Activated T-helper 1 cell treated with anti-CD3 and anti-CD28 coated beads, Interleukin-12 subunit alpha, Interleukin-12 subunit beta, Interleukin-2, Interleukin-4 antibody, amounts not matched to agents 30 ng/mL and 10 ng/mL and 1 ng/mL, durations not matched to agents 14 hours and 24 hours and 36 hours (primary cell): ENCODE measurements at regions of chr2 and their contacts with region 1.

Region 1: DNA sequence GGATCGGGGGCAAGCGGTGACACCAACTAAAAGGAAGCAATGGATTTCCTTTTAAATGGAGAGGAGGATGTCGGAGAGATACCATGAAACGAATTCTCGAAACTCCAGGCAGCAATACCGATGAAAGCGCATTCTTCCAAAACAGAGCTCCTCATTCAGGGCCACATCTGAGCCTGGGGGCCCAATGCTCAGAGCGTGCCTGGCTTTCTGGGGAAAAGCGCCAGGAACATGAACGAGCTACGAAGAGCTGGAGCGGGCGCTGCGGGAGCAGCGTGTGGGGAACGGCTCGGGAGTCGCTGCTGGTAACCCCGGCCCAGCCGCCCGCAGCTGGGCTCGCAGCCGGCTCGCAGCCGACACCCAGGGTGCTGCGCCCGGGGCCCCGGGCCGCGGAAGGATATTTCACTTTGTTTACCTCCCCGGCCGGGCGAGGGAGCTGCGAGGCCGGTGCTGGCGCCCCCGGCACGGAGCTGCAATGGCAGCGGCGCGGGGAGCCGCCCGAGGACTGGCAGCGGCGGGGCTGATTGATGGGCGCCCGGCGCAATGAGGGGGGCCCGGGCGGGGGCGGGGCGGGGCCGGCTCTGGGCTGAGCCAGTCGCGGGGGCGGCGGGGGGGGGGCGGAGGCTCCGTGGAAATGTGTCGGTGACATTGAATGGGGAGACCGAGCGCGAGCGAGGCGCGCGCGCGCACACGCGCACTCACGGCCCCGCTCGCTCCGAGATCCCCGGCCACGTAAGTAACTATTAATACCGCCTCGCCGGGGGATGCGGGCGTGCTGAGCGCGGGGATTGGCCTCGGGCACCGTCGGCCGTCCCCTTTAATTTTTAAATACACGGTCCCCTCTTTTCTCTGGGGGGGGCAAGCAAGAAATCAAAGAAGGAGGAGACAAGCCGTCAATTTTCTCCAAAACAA is at the start of gene TRIB2:
- DNase-seq: peak; percentile 82
- H3K4me3 Mint-ChIP-seq: peak within 1 kb of the TSS; percentile 91
- H3K27ac Mint-ChIP-seq: peak within 1 kb of the TSS; percentile 91
- H3K4me1 Mint-ChIP-seq: peaks cover 58% of the 10 kb centered on the region
- H3K27me3 Mint-ChIP-seq: peaks cover 10% of the 10 kb centered on the region
- total RNA-seq, gene TRIB2: 6.3 TPM in 2 replicates

Region 2: DNA sequence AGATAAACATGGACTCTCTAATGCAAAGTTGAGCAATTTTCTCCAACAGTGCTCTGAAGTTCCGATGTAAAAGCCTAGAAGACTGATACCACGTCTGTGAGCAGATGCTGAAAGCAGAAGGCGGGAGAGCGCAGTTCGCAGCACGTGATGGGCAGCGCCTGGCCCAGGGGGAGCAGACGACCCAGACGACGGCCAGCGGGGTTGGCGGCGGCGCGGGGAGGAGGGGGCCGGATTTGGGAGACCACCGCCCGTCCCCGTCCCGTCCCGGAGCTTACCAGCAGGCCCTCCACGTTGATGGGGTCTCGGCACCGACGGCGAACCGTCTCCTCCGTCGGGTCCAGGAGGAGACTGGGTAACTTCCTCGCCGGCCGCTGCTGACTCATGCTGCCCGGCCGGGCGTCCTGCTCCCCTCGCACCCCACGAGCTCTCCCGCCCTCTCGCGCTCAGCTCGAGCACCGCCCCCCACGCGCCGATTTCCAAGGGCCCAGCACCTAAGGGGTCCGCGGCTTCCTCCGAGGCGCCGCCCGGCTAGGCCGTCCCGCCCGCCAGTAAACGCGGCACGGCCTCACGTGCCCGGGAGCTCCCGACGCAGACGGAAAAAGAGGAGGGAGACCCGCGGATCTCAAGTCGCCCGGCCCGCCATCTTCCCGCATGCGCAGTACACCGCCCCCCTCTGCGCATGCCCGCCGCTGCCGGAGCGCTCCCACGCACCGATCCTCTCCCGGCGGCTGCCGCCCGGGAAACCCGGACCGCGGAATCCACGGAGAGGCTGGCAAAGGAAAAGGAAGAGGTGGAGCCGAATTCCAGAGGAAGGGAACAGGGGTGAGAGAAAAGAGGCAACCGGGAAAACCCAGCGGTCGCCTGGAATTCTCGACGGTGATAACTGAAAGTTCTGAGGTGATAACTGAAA is 1250.8 kb before region 1 on chr2 and contains the start of gene E2F6:
- intact Hi-C with region 1: loop called (anchors 10 kb)
- DNase-seq: peak; percentile 82
- H3K4me3 Mint-ChIP-seq: peak within 1 kb of the TSS; percentile 86
- H3K27ac Mint-ChIP-seq: peak within 1 kb of the TSS; percentile 92
- H3K4me1 Mint-ChIP-seq: peaks cover 34% of the 10 kb centered on the region
- H3K27me3 Mint-ChIP-seq: no peaks in the 10 kb centered on the region
- total RNA-seq, gene E2F6: 22.1 and 23.7 TPM in 2 replicates

Region 3: DNA sequence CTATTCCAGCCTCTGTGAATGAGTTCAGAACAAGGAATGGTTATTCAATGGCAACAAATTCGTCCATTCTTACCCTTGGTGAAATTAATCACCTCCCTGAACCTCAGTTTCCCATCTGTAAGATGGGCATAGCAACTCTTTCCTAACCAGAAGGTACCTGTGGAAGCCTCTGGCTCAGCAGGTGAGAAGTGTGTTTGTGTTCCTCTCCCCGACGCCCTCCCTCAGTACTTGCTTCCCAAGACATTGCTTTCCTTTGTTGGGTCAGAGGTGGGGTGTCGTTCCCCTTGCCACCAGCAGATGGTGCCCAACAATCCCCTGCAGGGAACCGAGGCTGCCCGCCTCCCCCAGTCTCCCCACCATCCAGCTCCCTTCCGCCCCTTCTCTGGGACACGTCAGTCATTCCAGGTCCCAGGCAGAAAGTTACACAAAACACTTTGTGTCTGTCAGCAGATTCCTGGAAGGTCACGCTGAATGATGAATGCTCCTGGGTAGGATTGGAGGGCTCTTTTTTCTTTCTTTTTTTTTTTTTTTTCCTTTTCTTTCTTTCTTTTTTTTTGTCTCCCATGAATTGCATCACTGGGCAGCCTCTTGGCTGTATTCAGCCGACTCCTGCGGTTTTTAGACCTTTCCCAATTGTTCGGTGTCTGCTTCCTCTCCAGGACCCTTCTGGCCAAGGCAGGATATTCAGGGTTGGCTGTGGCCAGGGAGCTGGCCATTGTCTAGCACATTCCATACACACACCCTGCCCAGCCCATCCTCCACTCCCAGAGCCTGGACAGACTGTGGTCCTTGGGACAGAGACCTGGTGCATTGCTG is 852.8 kb before region 1 on chr2:
- intact Hi-C with region 1: loop called (anchors 1 kb)
- DNase-seq: peak; percentile 22
- H3K4me3 Mint-ChIP-seq: no peak overlapping the region
- H3K27ac Mint-ChIP-seq: no peak overlapping the region
- H3K4me1 Mint-ChIP-seq: peaks cover 9% of the 10 kb centered on the region
- H3K27me3 Mint-ChIP-seq: peaks cover 19% of the 10 kb centered on the region

Region 4: GRCh38 chr2:12270876-12271588 is 445.5 kb before region 1 on chr2:
- intact Hi-C with region 1: loop called (anchors 5 kb)
- DNase-seq: no peak
- H3K4me3 Mint-ChIP-seq: no peak overlapping the region
- H3K27ac Mint-ChIP-seq: no peak overlapping the region
- H3K4me1 Mint-ChIP-seq: peaks cover 27% of the 10 kb centered on the region
- H3K27me3 Mint-ChIP-seq: peaks cover 11% of the 10 kb centered on the region

Region 5: DNA sequence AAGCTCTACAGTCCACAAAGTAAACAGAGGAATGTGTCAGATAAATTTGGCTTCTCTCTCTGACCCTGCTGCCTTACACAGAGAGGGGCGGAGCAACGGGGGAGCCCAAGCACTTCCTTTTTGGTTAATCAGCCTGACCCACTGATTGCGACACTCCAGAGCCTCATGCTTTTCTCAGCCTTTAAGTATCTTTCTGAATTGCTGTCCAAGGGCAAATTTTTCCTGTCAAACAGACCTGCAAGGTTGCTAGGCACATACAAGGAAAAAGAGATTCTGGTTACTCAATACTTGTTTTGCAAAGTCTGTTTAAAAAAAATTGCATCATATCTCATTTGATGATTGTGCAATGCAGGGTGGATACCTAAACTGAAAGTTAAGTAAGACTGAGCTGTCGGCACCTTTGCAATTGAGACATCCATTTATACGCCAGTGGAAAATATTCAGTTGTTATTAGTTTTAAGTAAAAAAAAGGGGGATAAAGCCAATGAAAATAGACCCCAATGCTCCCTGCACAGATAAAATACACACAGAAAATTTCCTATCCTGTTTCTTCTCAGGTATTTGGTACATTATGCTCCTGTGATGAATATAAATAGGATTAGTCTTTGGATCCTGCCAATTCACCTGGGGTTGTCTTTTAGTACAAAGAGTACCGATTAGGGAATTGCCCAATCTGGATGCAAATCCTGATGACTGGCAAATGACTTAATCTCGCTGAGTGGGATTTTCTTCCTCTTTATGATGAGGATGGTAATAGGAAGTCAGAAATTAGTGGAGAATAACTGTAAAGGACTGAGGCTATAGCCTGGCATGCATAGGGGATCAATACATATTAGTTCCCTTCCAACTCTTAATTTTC is 260.0 kb before region 1 on chr2:
- intact Hi-C with region 1: loop called (anchors 2 kb)
- DNase-seq: peak; percentile 40
- H3K4me3 Mint-ChIP-seq: peak overlapping the region; percentile 66
- H3K27ac Mint-ChIP-seq: peak overlapping the region; percentile 83
- H3K4me1 Mint-ChIP-seq: peaks cover 33% of the 10 kb centered on the region
- H3K27me3 Mint-ChIP-seq: no peaks in the 10 kb centered on the region

Region 6: DNA sequence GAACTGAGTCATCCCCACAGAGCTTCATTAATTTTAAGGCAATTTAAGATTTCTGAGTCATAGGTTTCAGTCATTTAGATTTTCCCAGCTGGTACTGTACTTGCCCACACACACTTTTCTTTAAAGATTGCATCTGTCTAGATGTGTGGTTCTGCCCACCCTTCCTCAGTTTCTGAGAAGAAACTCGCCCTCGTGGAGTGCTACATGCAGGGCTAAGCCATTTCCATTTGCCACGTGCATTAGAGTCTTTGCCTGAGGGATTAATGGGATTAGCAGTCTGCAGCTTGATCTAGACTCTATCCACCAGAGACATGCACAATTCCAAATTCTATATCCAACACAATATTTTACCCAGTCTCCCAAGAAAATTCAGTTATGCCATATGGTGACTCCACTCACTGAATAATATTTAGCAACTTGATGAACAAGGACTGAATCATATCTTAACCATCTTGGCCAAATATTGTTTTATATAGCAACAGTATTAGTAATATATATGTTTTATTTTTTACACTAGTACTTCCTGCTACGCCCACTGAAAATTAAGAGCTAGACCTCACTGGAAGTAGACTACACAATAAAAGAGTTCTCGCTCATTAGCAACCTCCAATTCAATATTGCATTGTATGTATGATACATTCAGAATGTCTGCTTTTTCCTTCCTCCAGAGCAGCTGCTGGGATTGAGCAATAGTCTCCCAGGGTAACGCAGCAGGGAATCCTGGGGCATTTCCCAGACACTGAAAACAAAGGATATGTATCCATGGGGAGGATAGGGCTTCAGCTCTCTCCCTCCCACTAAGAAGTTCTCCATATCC is 14.0 kb before region 1 on chr2:
- intact Hi-C with region 1: loop called (anchors 2 kb)
- DNase-seq: no peak
- H3K4me3 Mint-ChIP-seq: no peak overlapping the region
- H3K27ac Mint-ChIP-seq: peak overlapping the region; percentile 22
- H3K4me1 Mint-ChIP-seq: peaks cover 26% of the 10 kb centered on the region
- H3K27me3 Mint-ChIP-seq: peaks cover 16% of the 10 kb centered on the region

Region 7: GRCh38 chr2:13006829-13007717 is 290.5 kb after region 1 on chr2:
- intact Hi-C with region 1: loop called (anchors 1 kb)
- DNase-seq: peak; percentile 39
- H3K4me3 Mint-ChIP-seq: no peak overlapping the region
- H3K27ac Mint-ChIP-seq: no peak overlapping the region
- H3K4me1 Mint-ChIP-seq: no peaks in the 10 kb centered on the region
- H3K27me3 Mint-ChIP-seq: peaks cover 32% of the 10 kb centered on the region